A673 (cell line): ENCODE measurements at regions of chr6 and their contacts with region 1.

Region 1: DNA sequence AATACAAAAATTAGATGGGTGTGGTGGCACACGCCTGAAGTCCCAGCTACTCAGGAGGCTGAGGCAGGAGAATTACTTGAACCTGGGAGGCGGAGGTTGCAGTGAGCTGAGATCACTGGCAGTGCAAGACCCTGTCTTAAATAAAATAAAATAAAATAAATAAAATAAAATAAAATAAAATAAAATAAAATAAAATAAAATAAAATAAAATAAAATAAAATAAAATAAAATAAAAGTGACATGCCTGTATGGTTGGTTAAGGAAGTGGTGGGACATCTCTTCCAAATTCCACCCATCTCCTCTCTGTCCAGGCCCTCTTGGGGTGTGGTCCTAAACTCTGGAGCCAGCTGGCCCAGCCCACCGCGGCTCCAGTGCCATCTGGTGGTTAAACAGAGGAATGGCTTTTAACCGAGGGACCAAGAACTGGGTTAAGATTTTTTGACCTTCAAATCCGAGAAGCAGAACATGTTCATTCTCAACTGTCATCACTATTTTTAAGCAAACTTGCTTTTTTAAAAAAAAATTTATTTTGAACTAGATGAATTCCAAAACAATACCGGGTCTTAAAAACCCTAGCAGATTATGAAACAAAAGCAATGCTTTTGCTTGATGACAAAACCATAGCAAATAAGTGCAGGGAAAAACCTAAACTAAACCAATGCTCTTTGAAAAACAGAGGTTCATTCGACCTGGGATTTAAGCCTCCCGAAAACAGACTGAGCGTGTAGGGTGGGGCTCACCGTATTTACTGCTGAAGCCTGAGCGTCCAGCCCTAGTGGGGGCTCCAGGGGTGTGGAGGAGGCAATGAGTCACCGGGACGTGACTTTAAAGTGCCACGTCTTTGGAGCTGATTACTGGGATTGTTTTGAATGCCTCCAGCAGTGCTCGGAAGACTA is 68.8 kb downstream of the CDC5L start:
- DNase-seq: peak; percentile 77
- H3K4me3 ChIP-seq: no peak overlapping the region
- H3K27ac ChIP-seq: no peak overlapping the region
- H3K4me1 ChIP-seq: no peaks in the 10 kb centered on the region
- H3K27me3 ChIP-seq: no peaks in the 10 kb centered on the region
- CTCF ChIP-seq: peak; percentile 88

Region 2: DNA sequence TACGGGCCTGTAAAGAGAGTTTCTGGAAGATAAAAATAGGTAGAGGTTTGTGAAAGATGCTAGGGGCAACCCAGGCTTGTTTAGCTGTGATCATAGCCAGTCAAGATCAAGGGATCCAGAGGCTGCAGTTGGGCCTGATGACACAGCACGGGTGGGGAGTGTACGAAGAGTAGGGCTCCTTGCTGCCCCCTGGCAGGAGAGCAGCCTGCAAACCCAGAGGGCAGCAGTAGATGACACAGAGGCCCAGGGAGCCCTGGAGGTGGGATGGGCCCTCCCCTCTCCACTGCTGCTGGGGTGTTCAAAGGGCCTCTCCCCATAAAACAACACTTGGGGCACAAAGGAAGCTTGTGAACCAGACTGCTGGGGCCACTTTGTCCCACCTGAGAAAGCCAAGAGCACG is 639.1 kb before region 1 on chr6:
- CTCF ChIA-PET with region 1: no interaction called
- POLR2A ChIA-PET with region 1: no interaction called
- intact Hi-C with region 1: no loop called
- DNase-seq: peak; percentile 33
- H3K4me3 ChIP-seq: no peak overlapping the region
- H3K27ac ChIP-seq: no peak overlapping the region
- H3K4me1 ChIP-seq: no peaks in the 10 kb centered on the region
- H3K27me3 ChIP-seq: no peaks in the 10 kb centered on the region
- CTCF ChIP-seq: peak; percentile 28; the same call in 1 of the 2 replicates

Region 3: GRCh38 chr6:44221291-44221960 is 234.9 kb before region 1 on chr6:
- CTCF ChIA-PET with region 1: no interaction called
- POLR2A ChIA-PET with region 1: interaction called, 14 read pairs
- intact Hi-C with region 1: no loop called
- DNase-seq: peak; percentile 84
- H3K4me3 ChIP-seq: no peak overlapping the region
- H3K27ac ChIP-seq: peak overlapping the region; percentile 38
- H3K4me1 ChIP-seq: peaks cover 63% of the 10 kb centered on the region
- H3K27me3 ChIP-seq: no peaks in the 10 kb centered on the region
- CTCF ChIP-seq: peak; percentile 73

Region 4: GRCh38 chr6:44431118-44431725 is 25.1 kb before region 1 on chr6:
- CTCF ChIA-PET with region 1: no interaction called
- POLR2A ChIA-PET with region 1: no interaction called
- intact Hi-C with region 1: loop called (anchors 2 kb)
- DNase-seq: peak; percentile 73
- H3K4me3 ChIP-seq: no peak overlapping the region
- H3K27ac ChIP-seq: no peak overlapping the region
- H3K4me1 ChIP-seq: peaks cover 5% of the 10 kb centered on the region
- H3K27me3 ChIP-seq: no peaks in the 10 kb centered on the region
- CTCF ChIP-seq: peak; percentile 82

Region 5: DNA sequence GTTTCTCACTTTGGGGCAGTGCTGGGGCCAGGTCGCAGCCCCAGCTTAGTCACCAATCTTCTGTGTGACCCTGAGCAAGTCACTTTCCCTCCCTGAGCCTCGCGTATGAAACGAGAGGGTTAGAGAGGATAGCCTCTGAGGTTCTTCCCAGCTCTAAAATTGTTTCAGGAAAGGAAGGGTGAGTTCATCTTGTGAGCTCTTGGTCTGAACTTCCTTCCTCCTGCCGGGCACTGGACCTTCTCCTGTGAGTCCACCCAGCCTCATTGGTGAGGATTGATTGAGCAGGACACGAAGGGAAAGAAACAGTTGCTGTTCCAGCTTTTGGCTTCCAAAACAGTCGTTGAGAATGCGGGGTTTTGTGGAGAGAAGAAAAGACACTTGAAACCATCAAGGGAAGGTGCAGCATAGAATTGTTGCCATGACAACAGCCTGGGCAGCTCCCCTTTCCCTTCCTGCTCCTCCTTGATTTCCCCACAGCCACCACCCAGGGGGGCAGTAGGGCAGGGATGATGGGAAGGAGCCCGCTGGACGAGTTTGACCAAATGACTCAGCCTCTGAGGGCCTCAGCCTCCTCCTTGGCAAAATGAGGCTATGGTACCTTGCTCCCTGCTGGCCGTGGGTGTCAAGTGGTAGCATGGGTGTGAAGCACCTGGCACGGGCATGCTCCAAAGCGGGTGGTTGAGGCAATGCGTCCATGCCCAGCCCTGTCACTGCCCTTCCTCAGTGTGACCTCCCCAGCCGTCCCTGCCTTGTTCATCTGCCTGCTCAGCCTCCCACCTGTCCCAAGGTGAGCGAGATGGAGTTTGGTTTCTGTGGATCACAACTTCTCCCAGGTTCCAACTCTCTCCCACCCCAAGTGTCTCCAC is 39.0 kb after region 1 on chr6:
- CTCF ChIA-PET with region 1: no interaction called
- POLR2A ChIA-PET with region 1: no interaction called
- intact Hi-C with region 1: no loop called
- DNase-seq: no peak
- H3K4me3 ChIP-seq: no peak overlapping the region
- H3K27ac ChIP-seq: no peak overlapping the region
- H3K4me1 ChIP-seq: no peaks in the 10 kb centered on the region
- H3K27me3 ChIP-seq: no peaks in the 10 kb centered on the region
- CTCF ChIP-seq: no peak